Prostate gland (tissue), 2 donors: ENCODE measurements at regions of chr5 and their contacts with region 1.

Region 1: GRCh38 chr5:138583984-138584637 is 8.9 kb upstream of the HSPA9 start:
- DNase-seq: no peak
- H3K4me3 ChIP-seq: no peak overlapping the region
- H3K27ac ChIP-seq: no peak overlapping the region
- H3K4me1 ChIP-seq: peaks cover 2% of the 10 kb centered on the region
- H3K27me3 ChIP-seq: no peaks in the 10 kb centered on the region
- CTCF ChIP-seq: no peak
- POLR2A ChIP-seq: no peak

Region 2: GRCh38 chr5:138352071-138352721 is 231.9 kb before region 1 on chr5 and contains the start of gene KDM3B:
- intact Hi-C with region 1: no loop called
- DNase-seq: peak; percentile 61
- H3K4me3 ChIP-seq: peak within 1 kb of the TSS; percentile 85 to 96
- H3K27ac ChIP-seq: peak within 1 kb of the TSS; percentile 88 to 99
- H3K4me1 ChIP-seq: peaks cover 9% of the 10 kb centered on the region
- H3K27me3 ChIP-seq: no peaks in the 10 kb centered on the region
- CTCF ChIP-seq: peak; percentile 92 to 99 (median 96)
- POLR2A ChIP-seq: no peak
- total RNA-seq, gene KDM3B: 61.2 to 85.1 TPM

Region 3: GRCh38 chr5:138559937-138560336 is 24.2 kb before region 1 on chr5:
- intact Hi-C with region 1: no loop called
- DNase-seq: peak; percentile 72
- H3K4me3 ChIP-seq: no peak overlapping the region
- H3K27ac ChIP-seq: no peak overlapping the region
- H3K4me1 ChIP-seq: peaks cover 2% of the 10 kb centered on the region
- H3K27me3 ChIP-seq: no peaks in the 10 kb centered on the region
- CTCF ChIP-seq: no peak
- POLR2A ChIP-seq: no peak

Region 4: DNA sequence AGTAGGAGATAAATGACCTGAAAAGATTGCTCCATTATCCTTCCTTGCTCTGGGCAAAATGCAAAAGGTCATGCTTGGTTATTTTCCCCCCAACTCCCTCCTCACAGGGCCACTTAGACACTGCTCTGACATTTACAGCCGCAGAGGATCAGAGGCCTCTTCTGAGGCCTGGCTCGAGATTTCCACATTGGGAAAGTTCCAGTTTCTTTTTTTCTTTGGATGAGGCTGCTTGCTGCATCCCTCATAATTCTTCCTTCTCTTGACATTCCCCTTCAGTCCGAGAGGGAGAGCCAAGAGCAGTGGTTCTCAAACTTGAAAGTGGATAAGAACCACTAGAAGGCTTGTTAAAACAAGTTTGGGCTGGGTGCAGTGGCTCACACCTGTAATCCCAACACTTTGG is 51.2 kb after region 1 on chr5:
- intact Hi-C with region 1: loop called (anchors 5 kb)
- DNase-seq: peak; percentile 49
- H3K4me3 ChIP-seq: no peak overlapping the region
- H3K27ac ChIP-seq: peak overlapping the region in 1 of 2 donors; percentile 26
- H3K4me1 ChIP-seq: no peaks in the 10 kb centered on the region
- H3K27me3 ChIP-seq: no peaks in the 10 kb centered on the region
- CTCF ChIP-seq: no peak
- POLR2A ChIP-seq: no peak

Region 5: GRCh38 chr5:138725138-138725833 is 141.2 kb after region 1 on chr5:
- intact Hi-C with region 1: loop called (anchors 10 kb)
- DNase-seq: peak; percentile 93
- H3K4me3 ChIP-seq: peak overlapping the region in 1 of 2 donors; percentile 11
- H3K27ac ChIP-seq: peak overlapping the region; percentile 85 to 87
- H3K4me1 ChIP-seq: peaks cover 11% of the 10 kb centered on the region
- H3K27me3 ChIP-seq: no peaks in the 10 kb centered on the region
- CTCF ChIP-seq: peak; percentile 20 to 79 (median 62)
- POLR2A ChIP-seq: peak; percentile 65